Activated naive CD4-positive, alpha-beta T cell treated with anti-CD3 and anti-CD28 coated beads for 36 hours (primary cell): ENCODE measurements at regions of chr2 and their contacts with region 1.

Region 1: GRCh38 chr2:112692496-112692911 is 28.3 kb upstream of the NT5DC4 start:
- DNase-seq: peak; percentile 89
- H3K4me3 Mint-ChIP-seq: peak overlapping the region; percentile 4
- H3K27ac Mint-ChIP-seq: peak overlapping the region; percentile 80
- H3K4me1 Mint-ChIP-seq: peaks cover 29% of the 10 kb centered on the region
- H3K27me3 Mint-ChIP-seq: no peaks in the 10 kb centered on the region

Region 2: DNA sequence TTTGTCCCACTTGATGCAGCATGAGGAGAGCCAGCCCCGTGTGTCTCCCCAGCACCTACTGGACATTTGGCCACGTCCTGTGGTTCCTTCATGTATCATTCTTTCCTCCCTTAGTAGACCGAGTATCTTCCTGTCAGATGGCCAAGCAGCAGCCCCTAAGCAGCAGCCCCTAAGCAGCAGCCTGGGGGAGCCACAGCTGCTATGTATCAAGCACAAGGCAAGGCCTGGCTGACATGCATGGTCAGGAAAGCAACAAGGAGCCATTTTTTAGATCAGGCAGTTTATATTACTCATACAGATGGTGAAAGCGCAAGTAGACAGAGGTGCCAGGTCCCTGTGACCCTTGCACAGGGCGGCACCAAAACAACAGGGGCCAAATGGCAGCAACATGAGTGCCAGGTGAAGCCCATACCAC is 86.0 kb before region 1 on chr2:
- CTCF ChIA-PET with region 1: interaction called, 16 read pairs
- intact Hi-C with region 1: no loop called
- DNase-seq: no peak
- H3K4me3 Mint-ChIP-seq: no peak overlapping the region
- H3K27ac Mint-ChIP-seq: no peak overlapping the region
- H3K4me1 Mint-ChIP-seq: no peaks in the 10 kb centered on the region
- H3K27me3 Mint-ChIP-seq: no peaks in the 10 kb centered on the region

Region 3: DNA sequence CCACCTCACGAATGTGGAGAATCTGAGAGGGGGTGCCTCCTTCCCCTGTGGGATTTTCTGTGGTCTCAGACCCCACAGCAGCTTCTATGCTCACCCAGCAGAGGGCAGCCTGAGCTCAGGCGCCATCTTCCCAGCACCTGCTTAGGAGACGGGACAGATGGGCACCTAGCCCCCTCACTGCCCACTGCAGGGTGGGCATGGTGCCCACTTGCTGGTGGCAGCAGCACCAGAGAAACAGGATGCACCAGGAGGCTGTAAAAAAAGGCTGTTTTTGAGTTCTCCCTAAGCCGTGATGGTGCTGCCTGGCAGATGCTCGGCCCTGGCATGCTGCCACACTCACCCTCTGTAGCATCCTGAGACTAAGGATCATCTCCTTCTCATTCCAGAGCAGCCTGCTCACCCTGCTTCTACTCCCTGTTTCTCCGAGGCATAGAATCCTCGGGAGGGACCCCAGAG is 65.9 kb before region 1 on chr2:
- CTCF ChIA-PET with region 1: interaction called, 65 read pairs
- intact Hi-C with region 1: loop called (anchors 1 kb)
- DNase-seq: peak; percentile 77
- H3K4me3 Mint-ChIP-seq: peak overlapping the region; percentile 47
- H3K27ac Mint-ChIP-seq: peak overlapping the region; percentile 76
- H3K4me1 Mint-ChIP-seq: peaks cover 63% of the 10 kb centered on the region
- H3K27me3 Mint-ChIP-seq: no peaks in the 10 kb centered on the region

Region 4: DNA sequence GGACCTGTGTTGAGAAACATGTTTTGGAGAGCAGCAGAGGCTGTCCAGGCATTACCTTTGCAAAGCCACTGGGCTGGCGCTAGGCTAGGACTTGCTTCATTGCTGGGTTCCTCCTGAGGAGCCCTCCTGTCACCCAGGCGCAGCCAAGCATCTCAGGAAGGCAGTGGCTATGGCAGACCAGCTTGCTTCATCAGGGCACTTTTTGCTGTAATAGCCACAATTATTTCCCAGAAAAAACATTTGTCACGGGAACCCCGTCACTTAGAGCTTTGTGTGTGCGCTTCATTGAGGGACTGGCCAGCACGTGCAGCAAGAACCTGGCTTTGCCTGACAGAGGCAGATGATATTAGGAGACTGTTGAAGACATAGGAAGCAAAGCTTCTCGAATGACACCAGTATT is 10.4 kb before region 1 on chr2:
- CTCF ChIA-PET with region 1: no interaction called
- intact Hi-C with region 1: no loop called
- DNase-seq: no peak
- H3K4me3 Mint-ChIP-seq: no peak overlapping the region
- H3K27ac Mint-ChIP-seq: no peak overlapping the region
- H3K4me1 Mint-ChIP-seq: peaks cover 6% of the 10 kb centered on the region
- H3K27me3 Mint-ChIP-seq: no peaks in the 10 kb centered on the region

Region 5: DNA sequence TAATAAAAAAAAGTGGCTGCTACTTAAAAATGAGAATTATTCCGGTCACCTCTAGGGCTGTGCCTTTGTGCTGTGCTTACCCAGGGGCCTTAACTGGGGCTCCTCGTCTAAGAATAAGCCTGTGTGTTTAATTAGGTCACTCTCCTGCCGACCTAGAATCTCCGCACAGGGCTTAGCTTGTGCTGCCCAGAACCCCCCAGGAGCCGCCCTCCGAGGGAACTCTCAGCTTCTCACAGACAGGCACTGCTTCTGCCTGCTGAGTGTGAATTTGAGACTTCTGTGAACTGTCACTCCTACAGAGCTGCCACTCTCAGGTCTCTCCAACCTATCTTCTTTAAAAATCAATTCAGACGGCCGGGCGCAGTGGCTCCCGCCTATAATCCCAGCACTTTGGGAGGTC is 16.5 kb after region 1 on chr2:
- CTCF ChIA-PET with region 1: interaction called, 4 read pairs
- intact Hi-C with region 1: loop called (anchors 1 kb)
- DNase-seq: no peak
- H3K4me3 Mint-ChIP-seq: no peak overlapping the region
- H3K27ac Mint-ChIP-seq: no peak overlapping the region
- H3K4me1 Mint-ChIP-seq: peaks cover 15% of the 10 kb centered on the region
- H3K27me3 Mint-ChIP-seq: peaks cover 12% of the 10 kb centered on the region

Region 6: GRCh38 chr2:113098041-113098440 is 405.5 kb after region 1 on chr2:
- CTCF ChIA-PET with region 1: no interaction called
- intact Hi-C with region 1: loop called (anchors 1 kb)
- DNase-seq: peak; percentile 59
- H3K4me3 Mint-ChIP-seq: peak overlapping the region; percentile 50
- H3K27ac Mint-ChIP-seq: peak overlapping the region; percentile 79
- H3K4me1 Mint-ChIP-seq: peaks cover 19% of the 10 kb centered on the region
- H3K27me3 Mint-ChIP-seq: no peaks in the 10 kb centered on the region